Body of pancreas (tissue), 4 donors: ENCODE measurements at regions of chr6 and their contacts with region 1.

Region 1: DNA sequence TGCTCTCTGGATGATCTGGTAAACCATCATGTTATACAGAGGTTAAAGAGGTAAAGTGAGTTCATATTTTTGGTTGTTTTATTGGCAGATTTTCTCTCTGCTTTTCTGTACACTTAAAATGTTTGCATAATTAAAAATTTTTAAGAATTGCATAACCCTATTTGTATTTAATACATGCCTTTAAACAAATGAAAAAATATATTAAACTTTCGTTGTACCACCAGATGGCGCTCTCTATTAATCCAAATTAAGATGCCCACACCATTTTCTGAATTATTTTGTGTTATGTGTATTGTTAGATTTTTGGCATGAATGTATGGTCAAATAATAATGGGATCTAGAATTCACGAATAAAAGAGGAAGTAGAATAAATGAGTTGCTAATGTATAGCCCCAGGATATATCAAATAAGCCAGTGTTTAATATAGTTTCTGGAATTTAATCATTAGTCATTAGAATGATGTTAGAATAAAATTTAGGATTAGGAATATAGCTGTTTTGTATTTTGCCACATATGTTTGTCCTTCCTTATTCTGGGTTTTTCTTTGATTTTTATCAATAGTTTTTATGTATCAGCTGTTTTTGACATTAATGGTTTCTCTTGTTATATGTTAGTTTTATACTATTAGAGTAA is 38.9 kb downstream of the SMAP1 start:
- DNase-seq: no peak
- ATAC-seq: no peak
- H3K4me3 ChIP-seq: no peak overlapping the region
- H3K27ac ChIP-seq: no peak overlapping the region
- H3K4me1 ChIP-seq: peaks cover under 1% of the 10 kb centered on the region
- H3K27me3 ChIP-seq: no peaks in the 10 kb centered on the region
- CTCF ChIP-seq: peak; percentile 35 to 64 (median 61)
- POLR2A ChIP-seq: no peak

Region 2: GRCh38 chr6:70507161-70507560 is 199.4 kb before region 1 on chr6:
- intact Hi-C with region 1: no loop called
- DNase-seq: no peak
- ATAC-seq: no peak
- H3K4me3 ChIP-seq: no peak overlapping the region
- H3K27ac ChIP-seq: peak overlapping the region in 1 of 4 donors; percentile 2
- H3K4me1 ChIP-seq: peaks cover 5% of the 10 kb centered on the region
- H3K27me3 ChIP-seq: no peaks in the 10 kb centered on the region
- CTCF ChIP-seq: no peak
- POLR2A ChIP-seq: no peak

Region 3: DNA sequence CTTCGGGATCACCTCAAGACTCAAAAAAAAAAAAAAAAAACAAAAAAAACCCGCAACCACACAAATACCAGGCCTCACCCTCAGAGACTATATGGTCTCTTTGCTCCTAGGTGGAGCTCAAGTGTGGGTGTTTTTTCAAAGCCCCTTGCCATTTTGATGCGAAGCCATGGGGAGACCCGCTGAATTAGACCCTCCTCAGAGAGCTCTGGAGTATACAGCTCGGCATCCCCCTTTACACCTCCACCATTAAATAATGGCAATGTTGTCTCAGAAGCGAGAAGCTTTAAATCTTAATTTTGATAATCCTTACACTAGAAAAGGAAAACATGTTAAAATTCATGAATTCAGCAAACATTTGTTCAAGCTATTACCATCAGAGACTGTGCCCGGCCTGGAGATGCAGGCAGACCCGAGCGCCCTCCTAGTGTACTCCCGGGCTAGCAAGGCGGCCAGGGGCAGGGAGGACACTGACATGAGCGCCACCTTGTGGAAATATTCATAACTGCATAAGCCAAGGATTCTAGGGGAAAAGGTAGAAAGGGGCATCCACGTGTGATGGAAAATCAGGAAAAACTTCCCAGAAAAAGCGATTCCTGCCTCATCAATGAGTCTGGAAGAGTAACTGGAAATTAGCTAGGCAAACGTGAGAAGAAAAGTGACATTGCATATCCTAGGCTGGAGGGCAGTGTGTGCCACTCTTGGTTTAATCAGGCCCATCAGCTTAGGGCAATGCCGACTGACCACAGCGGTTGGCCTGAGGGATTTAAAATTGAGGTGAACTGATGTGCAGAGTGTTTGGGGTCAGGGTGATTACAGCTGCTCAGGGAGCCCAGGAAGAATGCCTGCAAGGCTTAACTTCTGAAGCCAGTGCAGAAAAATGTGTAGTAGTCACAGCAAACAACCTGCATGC is 177.7 kb after region 1 on chr6:
- intact Hi-C with region 1: loop called (anchors 10 kb)
- DNase-seq: peak; percentile 59 to 65 (median 63)
- ATAC-seq: peak; percentile 82
- H3K4me3 ChIP-seq: no peak overlapping the region
- H3K27ac ChIP-seq: no peak overlapping the region
- H3K4me1 ChIP-seq: no peaks in the 10 kb centered on the region
- H3K27me3 ChIP-seq: no peaks in the 10 kb centered on the region
- CTCF ChIP-seq: peak; percentile 80 to 95 (median 91)
- POLR2A ChIP-seq: no peak